ENCODE measurements at regions of chr7 and their contacts with region 1.

Region 1: GRCh38 chr7:4973728-4974198 is 14.8 kb upstream of the MMD2 start:
- DNase-seq: peak; percentile 91 to 95 (median 94)
- H3K4me3 ChIP-seq: peak overlapping the region in 1 of 2 donors; percentile 74
- H3K4me3 Mint-ChIP-seq: peak overlapping the region; percentile 94 to 99 (median 98)
- H3K27ac ChIP-seq: peak overlapping the region; percentile 64
- H3K27ac Mint-ChIP-seq: peak overlapping the region; percentile 93 to 99 (median 97)
- H3K4me1 ChIP-seq: peaks cover 16% of the 10 kb centered on the region
- H3K4me1 Mint-ChIP-seq: peaks cover 19 to 37% (median 28%) of the 10 kb centered on the region in 4 donors
- H3K27me3 ChIP-seq: no peaks in the 10 kb centered on the region
- H3K27me3 Mint-ChIP-seq: no peaks in the 10 kb centered on the region

Region 2: GRCh38 chr7:4797858-4798705 is 175.7 kb before region 1 on chr7:
- CTCF ChIA-PET with region 1: interaction called, 8 read pairs
- POLR2A ChIA-PET with region 1: no interaction called
- intact Hi-C with region 1: loop called (anchors 5 kb)
- DNase-seq: peak in 4 of 5 donors; percentile 45 to 59 (median 53)
- H3K4me3 ChIP-seq: no peak overlapping the region
- H3K4me3 Mint-ChIP-seq: no peak overlapping the region
- H3K27ac ChIP-seq: no peak overlapping the region
- H3K27ac Mint-ChIP-seq: no peak overlapping the region
- H3K4me1 ChIP-seq: no peaks in the 10 kb centered on the region
- H3K4me1 Mint-ChIP-seq: peaks cover 1 to 12% (median 6%) of the 10 kb centered on the region in 4 donors
- H3K27me3 ChIP-seq: no peaks in the 10 kb centered on the region
- H3K27me3 Mint-ChIP-seq: no peaks in the 10 kb centered on the region

Region 3: DNA sequence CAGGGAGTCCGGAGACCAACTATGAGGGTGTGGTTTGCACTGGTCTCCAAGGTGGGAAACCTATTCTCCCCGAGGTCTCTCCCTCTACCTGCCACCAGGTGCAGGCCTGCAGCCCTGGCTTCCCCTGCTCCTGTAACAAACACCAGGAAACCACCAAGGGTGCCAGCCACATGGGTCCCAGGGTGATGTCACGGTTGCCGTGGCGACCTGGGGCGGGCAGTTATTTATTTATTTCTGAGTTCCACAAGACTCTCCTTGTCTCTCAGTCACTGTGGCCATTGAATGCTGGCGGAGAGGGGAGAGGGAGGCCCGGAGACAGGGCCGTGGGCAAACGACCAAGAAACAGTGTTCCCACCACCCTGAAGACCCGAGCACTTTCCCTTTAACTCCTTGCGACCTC is 41.8 kb before region 1 on chr7:
- CTCF ChIA-PET with region 1: no interaction called
- POLR2A ChIA-PET with region 1: no interaction called
- intact Hi-C with region 1: no loop called
- DNase-seq: no peak
- H3K4me3 ChIP-seq: no peak overlapping the region
- H3K4me3 Mint-ChIP-seq: no peak overlapping the region
- H3K27ac ChIP-seq: no peak overlapping the region
- H3K27ac Mint-ChIP-seq: no peak overlapping the region
- H3K4me1 ChIP-seq: no peaks in the 10 kb centered on the region
- H3K4me1 Mint-ChIP-seq: no peaks in the 10 kb centered on the region
- H3K27me3 ChIP-seq: no peaks in the 10 kb centered on the region
- H3K27me3 Mint-ChIP-seq: peaks cover 0 to 5% of the 10 kb centered on the region in 2 donors

Region 4: DNA sequence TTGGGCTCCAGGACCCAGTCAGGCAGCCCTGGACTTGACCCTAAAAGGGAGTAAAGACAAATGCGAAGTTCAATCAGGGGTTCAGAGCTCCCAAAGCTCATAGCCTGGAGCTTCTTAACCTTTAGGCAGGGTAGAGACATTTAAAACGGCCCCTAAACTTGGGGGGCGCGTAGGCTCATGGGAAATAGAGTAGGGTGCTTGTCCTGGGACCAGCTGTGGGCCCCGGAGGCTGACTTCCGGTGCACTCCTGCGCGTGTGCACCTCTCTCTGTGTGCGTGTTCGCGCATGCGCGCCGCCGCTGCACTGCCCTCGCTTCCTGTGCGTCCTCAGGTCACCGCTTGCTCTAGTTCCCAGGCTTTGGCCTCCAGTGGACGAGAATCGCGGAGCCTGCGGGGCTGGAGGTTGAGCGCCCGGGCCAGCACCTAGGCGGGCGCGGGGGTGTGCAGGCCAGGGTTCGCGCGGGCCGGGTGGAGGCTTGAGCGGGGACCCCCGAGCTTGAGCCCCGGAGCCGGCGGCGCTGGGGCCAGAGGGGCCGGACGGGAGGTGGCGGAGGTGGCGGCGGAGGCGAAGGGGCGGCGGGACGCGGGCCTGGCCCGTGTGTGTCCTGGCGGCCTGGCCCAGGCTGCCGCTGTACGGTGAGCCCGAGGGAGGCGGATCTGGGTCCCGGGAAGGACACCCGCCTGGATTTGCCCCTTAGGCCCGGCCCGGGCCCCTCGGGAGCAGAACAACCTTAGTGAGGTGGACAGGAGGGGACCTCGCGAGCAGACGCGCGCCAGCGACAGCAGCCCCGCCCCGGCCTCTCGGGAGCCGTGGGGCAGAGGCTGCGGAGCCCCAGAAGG is 72.0 kb after region 1 on chr7 and contains the start of gene RBAK:
- CTCF ChIA-PET with region 1: interaction called, 17 read pairs
- POLR2A ChIA-PET with region 1: interaction called, 7 read pairs
- intact Hi-C with region 1: loop called (anchors 2 kb)
- DNase-seq: peak; percentile 84 to 90 (median 88)
- H3K4me3 ChIP-seq: peak within 1 kb of the TSS in 1 of 2 donors; percentile 83
- H3K4me3 Mint-ChIP-seq: peak within 1 kb of the TSS; percentile 88 to 97 (median 94)
- H3K27ac ChIP-seq: peak within 1 kb of the TSS; percentile 89
- H3K27ac Mint-ChIP-seq: peak within 1 kb of the TSS; percentile 89 to 96 (median 95)
- H3K4me1 ChIP-seq: peaks cover 5% of the 10 kb centered on the region
- H3K4me1 Mint-ChIP-seq: peaks cover 18 to 50% (median 24%) of the 10 kb centered on the region in 4 donors
- H3K27me3 ChIP-seq: no peaks in the 10 kb centered on the region
- H3K27me3 Mint-ChIP-seq: no peaks in the 10 kb centered on the region
- total RNA-seq, gene RBAK: 19.4 to 20.3 TPM

Region 5: DNA sequence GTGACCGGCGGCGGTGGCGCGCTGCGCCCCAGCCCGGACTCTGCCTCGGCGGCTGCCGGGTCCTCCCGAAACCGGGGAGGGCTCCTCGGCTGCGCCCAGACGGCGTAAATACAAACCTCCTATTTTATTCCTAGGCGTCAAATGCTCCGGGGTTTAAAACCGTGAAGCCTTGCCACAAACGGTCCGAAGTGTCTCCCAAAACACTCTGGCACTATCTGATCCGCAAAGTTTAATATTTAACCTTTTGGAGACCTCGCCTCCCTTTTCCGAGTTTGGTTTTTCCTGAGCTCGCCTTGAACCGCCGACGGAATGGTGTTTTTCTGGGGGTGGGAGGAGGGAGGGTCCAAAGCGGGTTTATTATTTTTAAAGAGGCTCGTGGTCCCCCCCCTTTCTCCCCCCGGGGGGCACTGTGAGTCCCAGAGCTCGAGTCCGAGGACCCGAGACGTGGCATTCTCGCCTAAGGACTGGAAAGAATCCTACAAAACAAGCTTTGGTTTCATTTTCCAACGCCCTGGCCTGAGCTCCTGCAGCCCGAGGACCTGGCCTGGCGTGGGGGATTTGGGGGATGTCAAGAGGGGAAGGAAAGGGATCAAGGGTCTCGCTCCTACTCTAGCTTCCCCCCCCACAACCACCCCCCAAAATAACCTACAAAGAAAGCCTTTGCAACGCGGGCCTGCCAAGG is 448.1 kb after region 1 on chr7:
- CTCF ChIA-PET with region 1: no interaction called
- POLR2A ChIA-PET with region 1: no interaction called
- intact Hi-C with region 1: no loop called
- DNase-seq: peak in 4 of 5 donors; percentile 15 to 31 (median 21)
- H3K4me3 ChIP-seq: peak overlapping the region; percentile 54 to 69
- H3K4me3 Mint-ChIP-seq: peak overlapping the region; percentile 73 to 83 (median 76)
- H3K27ac ChIP-seq: no peak overlapping the region
- H3K27ac Mint-ChIP-seq: peak overlapping the region in 3 of 7 donors; percentile 6 to 74 (median 64)
- H3K4me1 ChIP-seq: peaks cover 76% of the 10 kb centered on the region
- H3K4me1 Mint-ChIP-seq: peaks cover 16 to 64% (median 33%) of the 10 kb centered on the region in 4 donors
- H3K27me3 ChIP-seq: peaks cover 59% of the 10 kb centered on the region
- H3K27me3 Mint-ChIP-seq: peaks cover 24 to 48% of the 10 kb centered on the region in 2 donors